H1 (cell line): ENCODE measurements at regions of chr5 and their contacts with region 1.

Region 1: DNA sequence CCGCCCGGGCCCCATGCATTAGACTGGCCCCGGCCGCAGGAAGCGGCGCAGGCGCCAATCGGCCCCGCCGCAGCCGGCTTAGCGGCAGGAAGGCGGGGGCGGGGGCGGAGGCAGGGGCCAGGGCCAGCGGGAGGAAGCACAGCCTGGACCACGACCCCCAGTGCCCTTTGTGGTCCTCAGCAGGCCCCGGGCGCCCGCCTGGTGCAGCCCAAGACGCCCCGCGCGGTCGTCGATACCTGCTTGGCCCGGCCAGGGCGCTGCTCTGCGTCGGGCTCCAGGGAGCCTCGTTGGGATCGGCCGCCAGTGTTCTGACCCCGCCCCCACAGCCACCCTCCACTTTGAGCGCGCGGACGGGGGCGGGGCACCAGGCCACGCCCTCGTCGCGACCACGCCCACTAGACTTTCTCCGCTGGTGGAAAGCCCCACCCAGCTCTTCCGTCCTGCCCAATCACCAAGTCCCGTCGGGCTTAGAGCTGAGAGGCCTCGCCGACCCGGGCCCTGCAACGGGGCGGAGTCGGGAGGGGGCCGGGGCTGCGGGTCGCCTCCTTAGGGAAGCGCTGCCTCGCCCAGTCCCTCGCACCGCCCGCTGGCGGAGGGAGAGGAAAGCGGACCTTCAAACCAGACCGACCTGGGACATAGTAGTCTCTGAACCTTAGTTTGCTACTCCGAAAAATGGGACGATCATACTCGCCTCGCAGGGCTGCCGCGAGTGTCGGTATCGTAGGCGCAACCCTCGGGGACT is at the start of gene PDLIM7:
- DNase-seq: peak; percentile 98 to 99
- H3K4me3 ChIP-seq: peak within 1 kb of the TSS; percentile 61 to 83 (median 68)
- H3K27ac ChIP-seq: peak within 1 kb of the TSS; percentile 98
- H3K4me1 ChIP-seq: peaks cover 0 to 31% (median 27%) of the 10 kb centered on the region in 4 experiments; a peak in 6 of 7 replicates
- H3K27me3 ChIP-seq: peaks cover 2 to 12% (median 11%) of the 10 kb centered on the region in 4 experiments; a peak in 6 of 7 replicates
- CTCF ChIP-seq: peak in 1 of 3 experiments; percentile 7; a peak in 1 of 4 replicates
- EP300 ChIP-seq: no peak
- POLR2A ChIP-seq: peak in 1 of 2 experiments; percentile 91; a peak in 1 of 3 replicates
- RAD21 ChIP-seq: no peak
- total RNA-seq, gene PDLIM7: 86.7 and 94.2 TPM in 2 replicates

Region 2: DNA sequence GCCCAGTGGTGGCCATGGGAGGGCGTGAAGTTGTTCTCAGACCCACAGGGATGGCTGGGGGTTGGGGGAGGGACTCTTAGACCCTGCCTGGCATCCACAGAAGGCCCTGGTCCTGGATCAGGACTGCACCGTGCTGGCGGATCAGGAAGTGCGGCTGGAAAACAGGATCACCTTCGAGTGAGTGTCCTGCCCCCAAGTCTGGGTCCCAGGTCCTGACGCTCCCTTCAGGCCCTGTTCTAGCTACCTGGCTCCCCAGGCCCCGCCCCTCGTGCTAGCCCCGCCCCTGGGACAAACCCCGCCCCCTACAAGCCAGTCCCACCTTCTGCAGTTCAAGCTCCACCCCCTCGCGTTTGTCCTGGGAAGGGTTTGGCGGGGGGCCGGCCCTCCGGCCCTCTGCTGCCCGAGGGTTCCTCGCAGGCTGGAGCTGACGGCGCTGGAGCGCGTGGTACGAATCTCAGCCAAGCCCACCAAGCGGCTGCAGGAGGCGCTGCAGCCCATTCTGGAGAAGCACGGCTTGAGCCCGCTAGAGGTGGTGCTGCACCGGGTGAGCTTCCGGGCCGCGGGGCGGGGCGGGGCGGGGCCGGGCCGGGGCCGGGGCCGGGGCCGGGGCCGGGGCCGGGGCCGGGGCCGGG is 126.9 kb before region 1 on chr5:
- CTCF ChIA-PET with region 1: interaction called, 6 read pairs
- POLR2A ChIA-PET with region 1: interaction called, 13 read pairs
- DNase-seq: peak; percentile 93 to 99
- H3K4me3 ChIP-seq: peak overlapping the region; percentile 23 to 63 (median 58); a peak in 6 of 8 replicates
- H3K27ac ChIP-seq: 0 out of 2 replicates have a peak overlapping the region, but pooled peaks have one; percentile 60
- H3K4me1 ChIP-seq: peaks cover 8 to 36% (median 31%) of the 10 kb centered on the region in 4 experiments
- H3K27me3 ChIP-seq: peaks cover 1 to 14% (median 12%) of the 10 kb centered on the region in 4 experiments; a peak in 4 of 7 replicates
- CTCF ChIP-seq: peak in 2 of 3 experiments; percentile 79 to 98; a peak in 3 of 4 replicates
- EP300 ChIP-seq: no peak
- POLR2A ChIP-seq: 0 out of 3 replicates have a peak, but pooled peaks of 1 of the 2 experiments have one; percentile 16
- RAD21 ChIP-seq: peak; percentile 66 to 75

Region 3: GRCh38 chr5:177419051-177419450 is 78.4 kb before region 1 on chr5:
- CTCF ChIA-PET with region 1: no interaction called
- POLR2A ChIA-PET with region 1: no interaction called
- DNase-seq: no peak
- H3K4me3 ChIP-seq: no peak overlapping the region
- H3K27ac ChIP-seq: no peak overlapping the region
- H3K4me1 ChIP-seq: no peaks in the 10 kb centered on the region; a peak in 1 of 7 replicates
- H3K27me3 ChIP-seq: no peaks in the 10 kb centered on the region
- CTCF ChIP-seq: no peak
- EP300 ChIP-seq: no peak
- POLR2A ChIP-seq: no peak
- RAD21 ChIP-seq: no peak

Region 4: DNA sequence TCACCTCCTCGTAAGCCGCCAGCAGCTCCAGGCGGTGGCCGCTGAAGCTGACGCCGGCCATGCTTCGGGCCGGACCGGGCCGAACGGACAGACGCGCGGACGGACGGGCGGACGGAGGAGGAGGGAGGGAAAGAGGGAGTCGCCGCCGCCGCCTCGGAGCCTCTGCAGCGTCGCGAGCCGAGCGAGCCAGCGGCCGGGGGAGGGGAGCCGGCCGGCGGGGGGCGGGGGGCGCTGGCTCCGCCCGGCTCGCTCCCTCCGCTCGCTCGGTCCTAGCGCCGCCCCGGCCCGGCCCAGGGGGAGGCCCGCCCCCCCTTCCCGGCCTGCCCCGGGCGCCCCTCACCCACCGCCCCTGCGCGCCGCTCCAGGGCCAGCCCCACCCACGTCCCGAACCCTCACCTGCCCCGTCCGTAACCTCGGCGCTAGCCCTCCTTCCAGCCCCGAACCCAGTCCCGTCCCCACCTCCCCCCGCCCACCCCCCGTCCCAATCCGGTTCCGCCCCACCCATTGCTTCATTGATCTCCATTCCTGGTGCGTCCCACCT is 23.9 kb before region 1 on chr5 and contains the start of gene DBN1:
- CTCF ChIA-PET with region 1: interaction called, 162 read pairs
- POLR2A ChIA-PET with region 1: interaction called, 3,349 read pairs
- DNase-seq: peak in 1 of 2 experiments; percentile 74
- H3K4me3 ChIP-seq: peak within 1 kb of the TSS; percentile 78 to 96 (median 88)
- H3K27ac ChIP-seq: peak within 1 kb of the TSS; percentile 90
- H3K4me1 ChIP-seq: peaks cover 11 to 46% (median 39%) of the 10 kb centered on the region in 4 experiments
- H3K27me3 ChIP-seq: no peaks in the 10 kb centered on the region
- CTCF ChIP-seq: no peak
- EP300 ChIP-seq: no peak
- POLR2A ChIP-seq: no peak; a peak in 1 of 3 replicates
- RAD21 ChIP-seq: no peak
- total RNA-seq, gene DBN1: 325 and 333 TPM in 2 replicates

Region 5: GRCh38 chr5:177478711-177479646 is 18.5 kb before region 1 on chr5:
- CTCF ChIA-PET with region 1: interaction called, 306 read pairs
- POLR2A ChIA-PET with region 1: interaction called, 3,349 read pairs
- DNase-seq: no peak
- H3K4me3 ChIP-seq: no peak overlapping the region
- H3K27ac ChIP-seq: no peak overlapping the region
- H3K4me1 ChIP-seq: peaks cover 0 to 17% (median 9%) of the 10 kb centered on the region in 4 experiments; a peak in 6 of 7 replicates
- H3K27me3 ChIP-seq: no peaks in the 10 kb centered on the region
- CTCF ChIP-seq: no peak
- EP300 ChIP-seq: no peak
- POLR2A ChIP-seq: peak in 1 of 2 experiments; percentile 63; a peak in 2 of 3 replicates
- RAD21 ChIP-seq: no peak

Region 6: DNA sequence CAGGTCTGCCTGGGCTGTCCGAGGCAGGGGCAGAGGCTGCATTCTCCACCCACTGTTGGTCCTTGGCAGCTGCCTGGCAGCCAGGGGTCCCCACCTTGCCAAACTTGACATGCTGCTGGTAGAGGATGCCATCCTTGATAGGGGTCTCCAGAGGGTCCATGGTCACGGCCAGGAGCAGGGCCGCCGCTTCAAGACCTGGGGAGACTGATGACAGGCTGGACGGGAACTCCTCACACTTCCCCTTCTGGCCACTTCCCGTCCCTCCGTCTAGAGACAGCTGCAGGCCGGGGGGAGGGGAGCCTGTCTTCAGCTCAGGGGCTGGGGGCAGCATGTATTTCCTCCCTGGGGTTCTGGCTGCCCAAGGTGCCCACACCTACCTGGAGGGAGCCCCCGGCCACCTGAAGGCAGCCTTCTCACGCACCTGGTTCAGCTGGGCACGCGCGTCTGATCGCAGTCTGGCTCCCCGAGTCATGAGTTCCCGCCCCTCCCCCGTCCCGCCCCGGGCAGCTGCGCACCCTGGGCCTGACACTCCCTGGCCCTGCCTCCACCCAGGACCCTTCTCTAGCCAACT is 12.0 kb after region 1 on chr5 and contains the start of gene DOK3:
- CTCF ChIA-PET with region 1: interaction called, 306 read pairs
- POLR2A ChIA-PET with region 1: interaction called, 3,349 read pairs
- DNase-seq: no peak
- H3K4me3 ChIP-seq: no peak within 1 kb of the TSS
- H3K27ac ChIP-seq: no peak within 1 kb of the TSS
- H3K4me1 ChIP-seq: peaks cover 0 to 12% (median 9%) of the 10 kb centered on the region in 4 experiments; a peak in 5 of 7 replicates
- H3K27me3 ChIP-seq: no peaks in the 10 kb centered on the region
- CTCF ChIP-seq: no peak
- EP300 ChIP-seq: no peak
- POLR2A ChIP-seq: no peak
- RAD21 ChIP-seq: no peak
- total RNA-seq, gene DOK3: 6.4 and 8.6 TPM in 2 replicates

Region 7: DNA sequence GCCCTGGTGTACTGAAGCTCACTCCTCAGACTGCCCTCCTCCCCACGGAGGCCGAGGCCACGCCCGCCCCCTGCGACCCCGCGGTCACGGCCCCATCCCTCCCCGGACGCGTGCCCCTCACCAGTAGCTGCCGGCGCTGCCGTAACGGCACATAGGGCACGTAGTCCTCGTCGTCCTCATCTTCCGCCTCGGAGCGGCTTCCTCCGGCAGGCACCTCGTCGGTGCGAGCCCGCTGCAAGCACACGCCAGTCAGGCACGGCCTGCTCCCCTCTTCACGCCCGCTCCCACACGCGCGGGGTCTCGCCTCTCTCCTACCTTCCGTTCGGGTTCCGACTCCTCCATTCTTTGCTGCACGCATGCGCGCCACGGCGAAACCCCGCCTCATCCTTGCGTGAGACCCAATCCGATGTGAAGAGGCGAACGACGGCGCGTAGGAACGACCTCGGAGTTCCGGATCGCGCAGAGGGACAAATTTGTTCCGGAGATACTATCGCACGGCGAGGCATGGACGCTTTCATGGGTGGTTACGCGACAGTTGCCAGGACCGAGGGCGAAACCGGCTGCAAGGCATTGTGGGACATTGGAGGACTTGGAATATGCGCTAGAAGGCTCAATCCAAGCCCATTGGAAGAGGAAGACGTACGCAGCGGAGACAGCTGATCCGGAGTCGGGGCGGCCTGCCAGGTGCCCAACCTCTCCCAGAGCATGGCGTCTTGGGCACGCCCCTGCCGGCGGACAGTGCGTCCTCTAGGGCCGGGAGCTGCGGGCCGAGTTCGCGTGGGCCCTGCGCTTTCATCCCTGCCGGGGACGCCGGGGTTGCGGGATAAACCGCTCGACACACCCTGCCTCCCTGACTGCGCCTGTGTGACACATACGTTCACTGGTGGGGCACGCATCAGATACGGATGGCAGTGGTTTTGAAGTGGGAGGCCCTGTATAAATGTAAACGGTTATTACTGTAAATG is 19.4 kb after region 1 on chr5 and contains the start of gene DDX41:
- CTCF ChIA-PET with region 1: interaction called, 306 read pairs
- POLR2A ChIA-PET with region 1: interaction called, 3,349 read pairs
- DNase-seq: peak; percentile 90 to 97
- H3K4me3 ChIP-seq: peak within 1 kb of the TSS; percentile 82 to 98 (median 96)
- H3K27ac ChIP-seq: peak within 1 kb of the TSS; percentile 76
- H3K4me1 ChIP-seq: peaks cover 0 to 6% (median 5%) of the 10 kb centered on the region in 4 experiments; a peak in 5 of 7 replicates
- H3K27me3 ChIP-seq: no peaks in the 10 kb centered on the region
- CTCF ChIP-seq: no peak
- EP300 ChIP-seq: no peak
- POLR2A ChIP-seq: peak in 1 of 2 experiments; percentile 25; a peak in 1 of 3 replicates
- RAD21 ChIP-seq: no peak
- total RNA-seq, gene DDX41: 101 and 102 TPM in 2 replicates

Region 8: DNA sequence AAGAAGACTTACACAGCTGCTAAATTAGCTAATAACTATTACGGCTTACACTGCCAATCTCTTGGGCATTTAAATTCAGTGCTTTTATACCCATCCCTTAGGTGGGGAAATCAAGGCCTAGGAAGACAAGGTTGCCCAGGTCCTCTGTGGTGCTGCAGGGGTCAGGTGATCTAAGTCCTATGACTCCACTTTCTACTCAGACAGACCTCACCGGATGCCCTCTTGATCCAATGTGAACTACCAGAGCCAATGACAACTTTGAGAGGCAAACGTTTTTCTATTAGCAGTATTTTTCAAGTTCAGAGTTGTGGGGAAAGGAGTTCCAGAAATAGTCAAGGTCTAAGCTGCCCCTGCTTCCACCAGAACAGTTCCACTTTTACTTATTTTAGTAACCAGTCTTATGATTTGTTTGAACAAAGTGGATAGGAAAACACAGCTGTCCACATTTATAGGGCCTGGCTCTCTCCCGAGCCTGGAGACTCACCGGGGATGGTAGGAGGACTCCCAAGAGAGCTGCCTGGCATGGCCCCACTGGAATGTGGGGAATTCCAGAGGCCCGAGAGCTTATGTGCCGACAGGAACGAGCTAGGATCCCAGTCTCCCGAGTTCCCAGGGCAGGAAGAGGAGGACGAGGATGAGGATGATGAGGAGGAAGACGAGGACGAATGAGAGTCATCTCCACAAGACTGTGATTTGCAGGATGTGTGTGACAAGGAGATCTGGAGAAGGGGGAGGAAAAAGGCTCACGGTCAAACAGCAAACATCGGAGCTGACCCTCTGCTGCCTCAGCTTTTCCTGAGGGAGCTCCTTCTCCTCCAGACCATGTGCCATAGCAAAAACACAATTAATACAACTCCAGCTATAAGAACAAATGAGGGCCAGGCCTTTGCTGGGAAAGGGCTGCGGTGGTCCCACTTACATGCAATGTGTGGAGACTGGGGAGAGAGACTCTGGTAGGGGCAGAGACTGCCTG is 40.2 kb after region 1 on chr5:
- CTCF ChIA-PET with region 1: interaction called, 11 read pairs
- POLR2A ChIA-PET with region 1: interaction called, 4 read pairs
- DNase-seq: no peak
- H3K4me3 ChIP-seq: no peak overlapping the region
- H3K27ac ChIP-seq: 0 out of 2 replicates have a peak overlapping the region, but pooled peaks have one; percentile 11
- H3K4me1 ChIP-seq: 0 out of 7 replicates have a peak, but pooled peaks cover 0 to 3% (median 0%) of the 10 kb centered on the region in 4 experiments
- H3K27me3 ChIP-seq: no peaks in the 10 kb centered on the region
- CTCF ChIP-seq: no peak
- EP300 ChIP-seq: no peak
- POLR2A ChIP-seq: no peak
- RAD21 ChIP-seq: no peak